Calu3 (cell line): ENCODE measurements at regions of chr1 and their contacts with region 1.

Region 1: GRCh38 chr1:75615613-75616435 is 4.9 kb upstream of the SLC44A5 start:
- DNase-seq: peak; percentile 27
- H3K4me3 Mint-ChIP-seq: peak overlapping the region; percentile 75
- H3K27ac Mint-ChIP-seq: no peak overlapping the region
- H3K4me1 Mint-ChIP-seq: peaks cover 9% of the 10 kb centered on the region
- H3K27me3 Mint-ChIP-seq: peaks cover 19% of the 10 kb centered on the region
- CTCF ChIP-seq: no peak

Region 2: GRCh38 chr1:75430526-75430925 is 185.3 kb before region 1 on chr1:
- CTCF ChIA-PET with region 1: no interaction called
- intact Hi-C with region 1: loop called (anchors 5 kb)
- DNase-seq: no peak
- H3K4me3 Mint-ChIP-seq: no peak overlapping the region
- H3K27ac Mint-ChIP-seq: no peak overlapping the region
- H3K4me1 Mint-ChIP-seq: no peaks in the 10 kb centered on the region
- H3K27me3 Mint-ChIP-seq: no peaks in the 10 kb centered on the region
- CTCF ChIP-seq: no peak

Region 3: GRCh38 chr1:75502776-75503175 is 113.0 kb before region 1 on chr1:
- CTCF ChIA-PET with region 1: no interaction called
- intact Hi-C with region 1: loop called (anchors 5 kb)
- DNase-seq: peak; percentile 24
- H3K4me3 Mint-ChIP-seq: peak overlapping the region; percentile 31
- H3K27ac Mint-ChIP-seq: peak overlapping the region; percentile 89
- H3K4me1 Mint-ChIP-seq: peaks cover 10% of the 10 kb centered on the region
- H3K27me3 Mint-ChIP-seq: no peaks in the 10 kb centered on the region
- CTCF ChIP-seq: no peak

Region 4: DNA sequence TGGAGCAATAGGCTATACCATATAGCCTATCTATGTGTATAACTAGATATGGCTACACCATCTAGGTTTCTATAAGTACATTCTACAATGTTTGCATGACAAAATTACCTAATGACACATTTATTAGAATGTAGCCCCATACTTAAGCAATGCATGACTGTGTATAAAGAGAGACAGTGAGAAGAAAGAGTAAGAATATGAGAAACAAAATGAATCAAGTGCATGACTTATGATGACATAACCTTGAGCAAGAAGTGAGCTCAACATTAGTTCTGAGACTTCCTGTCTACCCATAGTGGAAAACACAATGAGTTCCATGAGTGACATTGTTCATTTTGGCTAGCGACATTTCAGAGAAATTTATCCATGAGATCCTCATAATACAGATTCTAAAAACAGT is 15.0 kb before region 1 on chr1:
- CTCF ChIA-PET with region 1: no interaction called
- intact Hi-C with region 1: no loop called
- DNase-seq: no peak
- H3K4me3 Mint-ChIP-seq: no peak overlapping the region
- H3K27ac Mint-ChIP-seq: no peak overlapping the region
- H3K4me1 Mint-ChIP-seq: no peaks in the 10 kb centered on the region
- H3K27me3 Mint-ChIP-seq: no peaks in the 10 kb centered on the region
- CTCF ChIP-seq: no peak